Activated T-helper 1 cell treated with anti-CD3 and anti-CD28 coated beads, Interleukin-12 subunit alpha, Interleukin-12 subunit beta, Interleukin-2, Interleukin-4 antibody, amounts not matched to agents 30 ng/mL and 10 ng/mL and 1 ng/mL, durations not matched to agents 14 hours and 24 hours and 36 hours (primary cell): ENCODE measurements at regions of chr10 and their contacts with region 1.

Region 1: DNA sequence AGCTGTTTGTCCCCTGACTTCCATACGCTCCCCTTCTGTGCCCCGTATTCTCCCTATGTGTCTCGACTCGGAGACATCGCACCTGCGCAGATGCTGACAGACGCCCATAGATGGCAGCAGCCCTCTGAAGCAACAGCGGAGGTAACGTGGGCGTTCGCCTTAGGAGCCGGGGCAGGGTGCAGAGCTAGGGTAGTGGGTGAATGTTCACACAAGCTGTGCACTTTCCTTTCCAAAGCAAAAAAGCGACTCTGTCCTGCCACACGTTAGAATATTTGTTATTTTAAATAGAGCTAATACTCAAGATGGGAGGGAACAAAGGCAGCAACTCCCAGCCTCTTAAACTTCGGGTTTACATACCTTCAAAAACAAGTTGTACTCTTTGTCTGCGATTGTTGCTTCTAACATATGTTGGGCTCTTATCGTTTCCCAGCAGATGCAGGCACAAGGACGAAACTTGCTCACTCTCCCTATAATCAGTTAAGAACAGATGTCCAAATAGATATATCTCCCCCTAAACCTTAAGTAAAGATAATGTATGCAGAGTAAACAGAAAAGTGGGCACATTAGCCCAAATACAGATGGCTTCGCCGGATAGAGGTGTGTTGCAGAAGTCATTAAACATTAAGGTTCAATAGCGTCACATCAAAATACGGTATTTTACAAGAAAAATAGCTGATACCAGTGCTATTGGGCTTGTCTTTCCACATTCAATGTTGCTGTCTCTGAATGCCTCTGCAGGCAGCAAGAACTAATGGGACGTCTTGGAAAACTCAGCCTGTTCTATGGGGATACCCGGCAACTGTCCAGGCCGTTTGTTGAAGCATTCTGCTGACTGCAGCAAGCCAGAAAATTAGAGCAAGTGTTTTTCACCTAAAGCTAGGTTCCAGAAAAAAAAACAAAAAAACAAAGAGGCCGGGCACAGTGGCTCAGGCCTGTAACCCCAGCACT is 340.3 kb upstream of the PRKCQ start:
- DNase-seq: peak; percentile 71
- H3K4me3 Mint-ChIP-seq: no peak overlapping the region
- H3K27ac Mint-ChIP-seq: peak overlapping the region; percentile 26
- H3K4me1 Mint-ChIP-seq: peaks cover 35% of the 10 kb centered on the region
- H3K27me3 Mint-ChIP-seq: no peaks in the 10 kb centered on the region

Region 2: DNA sequence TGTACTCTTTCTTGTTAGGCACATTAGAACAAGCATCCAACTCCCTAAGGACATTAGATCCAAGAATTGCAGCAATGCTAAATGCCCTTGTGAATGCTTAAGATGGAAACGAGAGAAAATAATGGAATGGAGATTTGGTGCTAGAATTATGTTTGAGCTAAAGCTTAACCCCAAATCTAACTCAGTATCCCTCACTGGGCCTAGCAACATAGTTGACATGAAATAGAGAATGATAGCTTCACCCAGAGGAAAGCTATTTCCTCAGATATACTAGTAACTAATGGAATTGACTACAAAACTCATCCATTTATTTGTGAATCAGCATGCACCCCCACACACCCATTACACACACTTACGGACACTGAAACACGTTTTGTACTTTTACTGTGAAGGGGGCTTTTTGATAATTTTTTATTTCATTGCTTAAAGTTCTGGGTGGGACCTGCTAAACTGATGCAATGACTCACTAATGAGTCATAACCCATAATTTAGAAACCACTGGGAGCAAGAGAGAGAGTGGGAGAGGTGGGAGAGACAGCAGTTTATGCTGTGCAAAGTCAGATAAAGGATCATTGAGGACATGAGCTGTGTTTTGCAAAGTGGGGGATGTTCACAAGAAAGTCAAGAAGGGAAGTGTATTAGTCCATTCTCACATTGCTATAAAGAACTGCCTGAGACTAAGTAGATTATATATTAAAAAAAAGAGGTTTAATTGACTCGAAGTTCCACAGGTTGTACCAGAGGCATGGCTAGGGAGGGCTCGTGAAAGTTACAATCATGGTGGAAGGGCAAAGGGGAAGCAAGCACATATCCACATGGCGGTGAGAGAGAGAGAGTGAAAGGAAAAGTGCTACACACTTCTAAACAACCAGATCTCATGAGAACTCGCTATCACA is 107.8 kb after region 1 on chr10:
- intact Hi-C with region 1: no loop called
- DNase-seq: no peak
- H3K4me3 Mint-ChIP-seq: no peak overlapping the region
- H3K27ac Mint-ChIP-seq: peak overlapping the region; percentile 47
- H3K4me1 Mint-ChIP-seq: peaks cover 40% of the 10 kb centered on the region
- H3K27me3 Mint-ChIP-seq: no peaks in the 10 kb centered on the region

Region 3: GRCh38 chr10:7121154-7121810 is 200.9 kb after region 1 on chr10:
- intact Hi-C with region 1: loop called (anchors 1 kb)
- DNase-seq: peak; percentile 37
- H3K4me3 Mint-ChIP-seq: no peak overlapping the region
- H3K27ac Mint-ChIP-seq: peak overlapping the region; percentile 38
- H3K4me1 Mint-ChIP-seq: peaks cover 6% of the 10 kb centered on the region
- H3K27me3 Mint-ChIP-seq: peaks cover 36% of the 10 kb centered on the region

Region 4: DNA sequence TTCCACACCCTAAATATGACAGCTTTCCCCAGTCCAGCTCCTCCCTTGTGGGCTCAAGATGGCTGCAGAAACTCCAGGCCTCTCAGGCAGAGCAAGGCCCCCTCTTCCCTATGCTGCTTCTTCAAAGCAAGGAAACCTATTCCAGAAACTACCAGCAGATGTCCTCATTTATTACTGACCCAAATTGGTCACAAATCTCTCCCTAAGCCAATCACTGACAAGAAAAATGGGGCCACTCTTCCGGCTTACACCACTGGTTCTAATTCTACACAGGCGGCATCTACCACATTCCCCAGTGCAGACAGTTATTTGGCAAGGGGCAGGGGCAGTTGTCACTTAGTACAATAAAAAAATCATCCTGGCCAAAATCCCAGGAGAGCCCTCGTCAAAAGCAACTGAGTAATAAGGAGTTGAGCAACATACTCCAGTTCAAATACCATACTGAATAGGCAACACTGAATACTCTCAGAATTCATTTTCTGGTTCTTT is 340.1 kb after region 1 on chr10:
- intact Hi-C with region 1: loop called (anchors 5 kb)
- DNase-seq: no peak
- H3K4me3 Mint-ChIP-seq: peak overlapping the region; percentile 49
- H3K27ac Mint-ChIP-seq: peak overlapping the region; percentile 75
- H3K4me1 Mint-ChIP-seq: peaks cover 59% of the 10 kb centered on the region
- H3K27me3 Mint-ChIP-seq: no peaks in the 10 kb centered on the region

Region 5: DNA sequence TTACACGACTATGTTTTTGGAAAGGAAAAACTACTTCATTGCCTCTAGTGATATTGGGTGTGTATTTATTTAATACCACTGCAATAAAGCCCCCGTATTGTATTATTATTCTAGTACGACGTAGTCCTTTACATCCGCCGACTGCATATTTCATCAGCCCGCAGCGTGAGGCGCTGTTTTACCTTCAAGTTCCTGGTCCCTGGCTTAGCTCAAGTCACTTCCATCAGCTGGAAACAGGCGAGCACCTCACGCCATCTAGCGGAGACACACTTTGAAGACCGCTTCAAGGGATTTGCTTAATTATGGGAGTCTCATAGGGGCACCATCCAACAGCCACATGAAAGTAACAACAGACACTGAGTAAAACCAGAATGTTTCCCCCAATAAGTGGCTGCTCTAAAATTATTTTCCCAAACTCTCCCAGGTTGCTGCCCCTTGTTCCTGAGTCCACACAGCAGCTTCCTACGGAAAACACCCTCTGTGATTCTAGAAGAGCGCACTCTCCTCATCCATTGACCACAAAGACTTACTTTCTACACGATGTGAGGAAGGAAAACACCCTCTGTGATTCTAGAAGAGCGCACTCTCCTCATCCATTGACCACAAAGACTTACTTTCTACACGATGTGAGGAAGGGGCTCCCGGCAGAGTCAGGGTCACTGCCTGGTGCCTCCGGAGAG is 767.0 kb after region 1 on chr10:
- intact Hi-C with region 1: loop called (anchors 5 kb)
- DNase-seq: peak; percentile 66
- H3K4me3 Mint-ChIP-seq: no peak overlapping the region
- H3K27ac Mint-ChIP-seq: no peak overlapping the region
- H3K4me1 Mint-ChIP-seq: peaks cover 19% of the 10 kb centered on the region
- H3K27me3 Mint-ChIP-seq: peaks cover 28% of the 10 kb centered on the region

Region 6: DNA sequence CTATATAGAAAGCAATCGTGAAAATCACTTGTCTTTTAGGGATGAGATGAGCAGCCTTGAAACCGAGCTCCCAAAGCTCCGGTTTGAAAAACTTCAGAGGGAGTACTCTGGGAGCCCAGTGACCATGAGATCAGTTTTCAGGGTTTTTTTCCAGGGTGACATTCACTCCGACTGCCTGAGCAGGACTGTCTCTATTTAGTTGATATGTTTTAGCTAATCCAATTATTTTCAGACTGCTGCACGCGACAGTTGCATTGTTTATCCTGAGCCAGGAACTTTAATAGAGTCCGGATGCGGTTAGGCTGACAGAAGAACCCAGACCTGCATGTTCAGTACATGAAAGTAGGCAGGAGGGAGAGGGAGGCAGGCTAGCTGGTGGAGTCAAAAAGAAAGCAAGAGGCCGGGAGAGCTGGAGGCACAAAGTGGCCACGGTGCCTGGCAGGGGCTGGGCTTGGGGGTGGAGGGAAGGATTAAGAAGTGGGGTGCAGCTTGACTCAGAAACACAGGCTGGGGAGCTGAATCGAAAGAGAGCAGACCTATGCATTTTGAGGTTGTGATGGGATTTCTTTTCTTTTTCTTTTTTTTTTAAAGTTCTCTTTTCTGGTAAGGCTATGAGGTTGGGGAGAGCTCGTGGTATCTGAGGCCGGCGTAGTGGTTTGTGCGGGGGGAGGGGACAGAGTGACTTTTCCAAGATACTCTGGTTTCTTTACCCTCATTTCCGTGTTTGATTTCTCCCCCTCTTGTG is 1139.8 kb after region 1 on chr10:
- intact Hi-C with region 1: loop called (anchors 10 kb)
- DNase-seq: peak; percentile 73
- H3K4me3 Mint-ChIP-seq: peak overlapping the region; percentile 98
- H3K27ac Mint-ChIP-seq: peak overlapping the region; percentile 96
- H3K4me1 Mint-ChIP-seq: peaks cover 74% of the 10 kb centered on the region
- H3K27me3 Mint-ChIP-seq: peaks cover 1% of the 10 kb centered on the region